A673 (cell line): ENCODE measurements at regions of chr5 and their contacts with region 1.

Region 1: GRCh38 chr5:91499943-91500531 is 116.9 kb upstream of the ARRDC3 start:
- DNase-seq: peak; percentile 71
- H3K4me3 ChIP-seq: no peak overlapping the region
- H3K27ac ChIP-seq: no peak overlapping the region
- H3K4me1 ChIP-seq: peaks cover 5% of the 10 kb centered on the region
- H3K27me3 ChIP-seq: no peaks in the 10 kb centered on the region
- CTCF ChIP-seq: peak; percentile 73

Region 2: DNA sequence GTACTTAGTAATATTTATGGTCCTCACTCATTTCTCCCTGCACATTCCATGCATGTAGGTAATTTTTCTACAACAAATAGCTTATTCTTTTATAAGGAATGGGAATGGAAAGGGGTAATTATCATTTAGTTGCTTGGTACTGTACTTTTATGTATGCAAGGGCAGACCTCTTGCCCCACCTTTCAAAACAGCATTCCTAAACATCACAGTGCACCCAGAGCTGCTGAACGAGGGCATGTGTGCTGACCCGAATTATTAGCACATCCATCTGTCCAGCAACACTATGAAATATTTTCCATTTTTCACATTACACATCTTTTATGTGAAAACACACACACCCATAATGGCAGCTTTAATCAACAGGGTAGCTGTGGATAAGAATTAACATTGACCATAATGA is 111.7 kb after region 1 on chr5:
- CTCF ChIA-PET with region 1: no interaction called
- POLR2A ChIA-PET with region 1: no interaction called
- intact Hi-C with region 1: loop called (anchors 5 kb)
- DNase-seq: no peak
- H3K4me3 ChIP-seq: no peak overlapping the region
- H3K27ac ChIP-seq: no peak overlapping the region
- H3K4me1 ChIP-seq: no peaks in the 10 kb centered on the region
- H3K27me3 ChIP-seq: no peaks in the 10 kb centered on the region
- CTCF ChIP-seq: no peak

Region 3: GRCh38 chr5:91632871-91633270 is 132.8 kb after region 1 on chr5:
- CTCF ChIA-PET with region 1: no interaction called
- POLR2A ChIA-PET with region 1: no interaction called
- intact Hi-C with region 1: loop called (anchors 5 kb)
- DNase-seq: peak; percentile 17
- H3K4me3 ChIP-seq: no peak overlapping the region
- H3K27ac ChIP-seq: no peak overlapping the region
- H3K4me1 ChIP-seq: no peaks in the 10 kb centered on the region
- H3K27me3 ChIP-seq: no peaks in the 10 kb centered on the region
- CTCF ChIP-seq: no peak